Left colon (tissue), 2 donors: ENCODE measurements at regions of chr7 and their contacts with region 1.

Region 1: DNA sequence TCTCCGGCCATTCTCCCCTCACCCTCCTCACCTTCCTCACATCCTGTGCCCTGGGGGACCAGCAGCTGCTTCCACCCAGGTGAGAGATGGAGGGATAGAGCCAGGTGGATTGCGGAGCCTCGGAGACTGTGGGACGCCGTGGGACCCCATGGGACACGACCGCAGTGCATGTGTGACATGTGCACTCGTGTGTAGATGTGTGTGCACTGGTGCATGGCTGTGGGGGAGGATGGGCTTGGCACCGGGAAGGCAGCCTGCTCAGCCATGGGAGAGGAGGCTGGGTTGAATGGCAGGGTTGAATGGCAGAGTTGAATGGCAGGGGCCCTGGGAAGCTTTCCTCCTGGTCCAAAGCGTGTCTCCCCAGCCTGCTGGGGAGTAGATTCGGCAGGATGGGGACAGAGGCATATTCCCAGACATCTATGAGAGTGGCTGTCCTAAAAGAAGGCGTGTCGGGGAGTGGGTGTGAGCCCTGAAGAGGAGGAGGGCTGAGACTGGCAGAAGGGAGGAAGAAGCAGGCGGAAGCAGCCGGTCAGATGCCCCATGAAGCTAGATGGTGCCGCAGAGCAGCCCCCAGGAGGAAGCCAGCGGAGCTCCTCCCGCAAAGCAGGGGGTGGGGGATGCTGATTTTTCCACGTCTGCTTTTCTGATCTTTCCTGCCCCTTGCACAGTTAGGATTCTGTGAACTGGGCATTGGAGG is 815 bp downstream of the GIMAP8 start:
- DNase-seq: peak; percentile 48 to 64
- ATAC-seq: peak; percentile 21

Region 2: GRCh38 chr7:150740053-150740452 is 288.8 kb after region 1 on chr7:
- intact Hi-C with region 1: loop called in 1 of 2 experiments (anchors 10 kb)
- DNase-seq: no peak
- ATAC-seq: no peak

Region 3: DNA sequence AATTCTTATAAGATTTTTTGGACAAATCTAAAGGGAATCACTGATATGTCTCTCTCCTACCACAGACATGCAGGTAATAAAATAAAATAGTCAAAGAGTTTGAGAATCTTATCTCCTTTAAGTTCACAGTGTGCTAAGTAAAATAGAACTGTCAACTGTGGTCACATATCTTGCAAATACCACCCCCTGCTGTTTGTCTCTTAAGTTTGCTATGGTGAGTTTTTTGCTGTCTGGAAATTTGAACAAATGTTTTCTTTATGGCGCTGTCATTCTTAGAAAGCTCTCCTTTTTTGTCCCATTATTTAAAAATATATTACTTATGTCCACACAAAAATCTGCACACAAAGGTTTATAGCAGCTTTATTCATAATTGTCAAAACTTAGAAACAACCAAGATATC is 305.6 kb after region 1 on chr7:
- intact Hi-C with region 1: loop called in 1 of 2 experiments (anchors 5 kb)
- DNase-seq: no peak
- ATAC-seq: peak; percentile 58